GM12878 (cell line): ENCODE measurements at regions of chr1 and their contacts with region 1.

Region 1: DNA sequence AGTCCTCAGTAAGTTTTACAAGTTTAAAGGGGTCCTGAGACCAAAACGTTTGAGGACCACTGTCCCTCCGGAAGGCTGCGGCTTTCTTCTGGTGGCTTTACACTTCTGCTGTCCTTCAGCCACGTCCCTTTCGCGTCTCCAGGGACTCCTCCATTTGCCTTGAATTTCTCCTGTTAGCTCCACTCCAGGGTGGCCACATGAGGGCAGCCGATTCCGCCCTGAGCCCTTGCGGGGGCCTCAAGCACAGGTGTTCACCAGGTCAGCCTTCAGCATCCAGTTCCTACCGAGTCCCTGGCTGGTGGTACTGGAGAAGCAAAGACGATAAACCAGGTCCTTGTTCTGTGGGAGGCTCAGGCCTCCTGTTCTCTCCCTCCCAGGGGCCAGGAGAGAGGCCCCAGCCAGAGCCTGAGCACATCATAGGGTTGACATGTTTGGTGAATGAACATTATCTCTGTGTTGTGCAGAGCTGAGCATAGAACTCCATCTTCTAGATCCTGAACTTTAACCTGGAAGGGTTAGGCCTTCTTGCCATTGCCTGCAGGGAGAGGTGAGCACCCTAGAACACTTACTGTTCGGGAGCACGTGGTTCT is 27.4 kb upstream of the COQ8A start:
- DNase-seq: peak; percentile 19
- ATAC-seq: peak; percentile 74
- H3K4me3 ChIP-seq: no peak overlapping the region
- H3K27ac ChIP-seq: no peak overlapping the region
- H3K4me1 ChIP-seq: peaks cover 10% of the 10 kb centered on the region
- H3K27me3 ChIP-seq: no peaks in the 10 kb centered on the region
- CTCF ChIP-seq: peak; percentile 66 to 84 (median 69); a peak in 5 of 6 replicates
- EP300 ChIP-seq: no peak
- POLR2A ChIP-seq: no peak
- RAD21 ChIP-seq: peak; percentile 87

Region 2: DNA sequence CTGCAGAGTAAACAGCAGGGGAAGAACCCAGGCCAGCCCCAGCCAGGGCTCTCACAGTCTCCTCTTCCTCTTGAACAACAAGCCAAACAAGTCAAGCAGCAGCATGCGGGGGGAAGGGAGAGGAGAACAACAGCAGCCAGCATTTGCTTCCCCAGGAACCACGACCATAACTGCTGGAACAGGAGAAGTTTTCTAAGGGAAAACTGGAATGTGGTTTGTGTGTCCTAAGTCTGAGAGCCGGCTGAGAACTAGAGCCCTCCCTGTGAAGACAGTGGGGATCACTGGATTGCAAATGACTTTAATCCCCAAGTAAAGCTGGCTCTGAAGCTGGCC is 75.6 kb after region 1 on chr1:
- CTCF ChIA-PET with region 1: no interaction called
- POLR2A ChIA-PET with region 1: no interaction called
- RAD21 ChIA-PET with region 1: no interaction called
- SMC1A ChIA-PET with region 1: no interaction called
- in situ Hi-C with region 1: no loop called
- intact Hi-C with region 1: no loop called
- DNase-seq: no peak
- ATAC-seq: no peak
- H3K4me3 ChIP-seq: no peak overlapping the region
- H3K27ac ChIP-seq: no peak overlapping the region
- H3K4me1 ChIP-seq: peaks cover 9% of the 10 kb centered on the region; the same call in 1 of the 2 replicates
- H3K27me3 ChIP-seq: no peaks in the 10 kb centered on the region
- CTCF ChIP-seq: no peak
- EP300 ChIP-seq: no peak
- POLR2A ChIP-seq: no peak
- RAD21 ChIP-seq: no peak

Region 3: GRCh38 chr1:227032396-227032795 is 119.7 kb after region 1 on chr1:
- CTCF ChIA-PET with region 1: no interaction called
- POLR2A ChIA-PET with region 1: no interaction called
- RAD21 ChIA-PET with region 1: no interaction called
- SMC1A ChIA-PET with region 1: no interaction called
- in situ Hi-C with region 1: no loop called
- intact Hi-C with region 1: loop called (anchors 5 kb)
- DNase-seq: no peak
- ATAC-seq: no peak
- H3K4me3 ChIP-seq: no peak overlapping the region
- H3K27ac ChIP-seq: no peak overlapping the region
- H3K4me1 ChIP-seq: no peaks in the 10 kb centered on the region
- H3K27me3 ChIP-seq: no peaks in the 10 kb centered on the region
- CTCF ChIP-seq: no peak
- EP300 ChIP-seq: no peak
- POLR2A ChIP-seq: no peak
- RAD21 ChIP-seq: no peak